ENCODE measurements at regions of chr11 and their contacts with region 1.

Region 1: GRCh38 chr11:133981156-133981555 is 24.4 kb upstream of the IGSF9B start:
- DNase-seq: no peak
- H3K4me3 ChIP-seq: no peak overlapping the region
- H3K27ac ChIP-seq: no peak overlapping the region
- H3K4me1 ChIP-seq: no peaks in the 10 kb centered on the region
- H3K27me3 ChIP-seq: no peaks in the 10 kb centered on the region
- CTCF ChIP-seq: no peak

Region 2: GRCh38 chr11:133887692-133888332 is 93.3 kb before region 1 on chr11:
- CTCF ChIA-PET with region 1: no interaction called
- dilution Hi-C with region 1: loop called (anchors 5 kb)
- in situ Hi-C with region 1: no loop called
- intact Hi-C with region 1: no loop called
- DNase-seq: no peak
- H3K4me3 ChIP-seq: no peak overlapping the region
- H3K27ac ChIP-seq: no peak overlapping the region
- H3K4me1 ChIP-seq: no peaks in the 10 kb centered on the region
- H3K27me3 ChIP-seq: no peaks in the 10 kb centered on the region
- CTCF ChIP-seq: no peak

Measured in mammary epithelial cell (primary cell).